ENCODE measurements at regions of chr20 and their contacts with region 1.

Region 1: DNA sequence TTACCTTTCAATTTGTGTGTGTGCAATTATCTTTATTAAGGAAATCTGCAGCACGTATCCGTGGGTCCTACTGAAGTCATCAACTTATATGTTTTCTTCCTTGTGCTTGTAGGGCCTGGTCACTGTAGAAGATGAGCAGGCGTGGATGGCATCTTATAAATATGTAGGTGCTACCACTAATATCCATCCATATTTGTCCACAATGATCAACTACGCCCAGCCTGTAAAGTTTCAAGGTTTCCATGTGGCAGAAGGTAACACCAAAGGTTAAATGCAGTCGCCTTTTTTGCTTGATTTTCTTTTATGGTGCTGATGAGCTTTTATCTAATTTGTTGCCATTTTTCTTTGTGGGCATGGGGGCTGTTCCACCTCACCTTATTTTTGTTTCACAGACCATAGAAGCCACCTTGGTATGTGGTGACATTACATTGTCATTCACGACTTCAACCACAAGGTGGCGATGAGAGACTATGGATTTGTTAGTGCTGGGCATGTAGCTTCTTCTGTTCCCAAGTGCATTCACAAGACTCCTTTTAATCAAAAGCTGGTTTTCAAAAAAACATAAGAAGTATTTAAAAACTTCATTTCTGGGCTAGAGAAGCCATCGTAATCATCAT is 106.5 kb upstream of the LAMP5 start:
- DNase-seq: peak; percentile 33
- H3K4me3 ChIP-seq: no peak overlapping the region
- CTCF ChIP-seq: peak; percentile 72

Region 2: GRCh38 chr20:8756410-8756809 is 651.5 kb before region 1 on chr20:
- CTCF ChIA-PET with region 1: interaction called, 11 read pairs
- POLR2A ChIA-PET with region 1: no interaction called
- DNase-seq: peak; percentile 52
- H3K4me3 ChIP-seq: no peak overlapping the region
- CTCF ChIP-seq: no peak

Region 3: DNA sequence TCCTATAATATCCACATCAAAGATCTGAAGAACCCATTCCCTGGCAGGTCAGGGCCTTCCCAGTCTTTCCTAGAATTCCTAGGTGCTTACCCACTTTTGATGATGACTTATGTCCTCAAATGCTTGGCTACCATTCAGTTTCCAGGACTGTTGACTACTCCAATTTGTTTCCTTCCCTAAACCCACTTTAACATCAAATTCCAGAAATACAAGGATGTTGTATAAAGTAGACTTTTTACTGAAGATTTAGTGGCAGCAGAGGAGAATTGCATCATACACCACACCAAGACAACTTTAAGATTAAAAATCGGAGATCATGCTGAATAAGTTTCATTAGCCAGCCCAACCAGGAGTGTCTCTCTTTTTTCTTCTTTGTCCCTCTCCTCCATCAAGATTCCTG is 96.8 kb before region 1 on chr20:
- CTCF ChIA-PET with region 1: no interaction called
- POLR2A ChIA-PET with region 1: no interaction called
- DNase-seq: no peak
- H3K4me3 ChIP-seq: no peak overlapping the region
- CTCF ChIP-seq: no peak

Region 4: DNA sequence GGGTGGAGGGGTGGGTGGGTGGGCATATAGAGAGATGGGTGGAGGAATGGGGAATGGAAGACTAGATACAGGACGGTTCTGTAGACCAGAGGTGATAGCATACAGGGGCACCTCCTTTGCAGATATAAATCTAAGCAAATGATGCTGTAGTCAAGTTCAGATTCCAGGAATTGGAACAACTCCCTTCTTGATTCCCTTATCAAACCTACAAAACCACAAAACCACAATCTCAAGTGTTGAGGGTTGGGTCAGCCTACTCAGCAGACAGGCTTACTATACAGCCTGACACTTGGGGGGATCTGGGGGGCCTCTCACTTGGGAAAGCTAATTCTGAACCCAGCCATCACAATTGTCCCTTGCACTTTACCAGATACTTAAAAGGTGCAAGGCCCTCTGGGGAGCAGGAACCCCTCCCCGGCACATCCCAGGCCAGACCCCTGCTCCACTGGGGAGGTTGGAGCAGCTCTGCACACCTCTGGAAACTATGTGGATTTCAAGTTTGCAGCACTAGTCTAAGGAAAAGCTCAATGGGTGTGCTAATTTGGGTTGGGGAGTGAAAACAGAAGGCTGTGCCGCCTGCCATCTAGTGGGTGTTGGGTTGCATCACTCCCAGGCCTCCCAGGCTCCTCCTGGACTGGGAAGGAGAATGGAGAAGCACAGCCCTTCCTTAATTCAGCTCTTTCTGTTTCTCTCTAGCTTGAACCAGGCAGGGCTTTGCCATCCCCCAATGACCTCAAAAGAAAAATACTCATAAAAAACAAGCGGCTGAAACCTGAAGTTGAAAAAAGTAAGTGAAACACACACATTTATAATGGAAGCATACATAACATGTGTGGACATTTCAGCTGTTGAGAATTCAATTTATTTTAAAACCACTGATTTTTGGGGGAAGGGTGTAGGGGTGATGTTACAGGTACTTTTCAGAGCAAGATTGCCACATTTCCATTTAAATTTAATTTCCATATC is 14.7 kb before region 1 on chr20:
- CTCF ChIA-PET with region 1: interaction called, 27 read pairs
- POLR2A ChIA-PET with region 1: no interaction called
- DNase-seq: no peak
- H3K4me3 ChIP-seq: no peak overlapping the region
- CTCF ChIP-seq: peak; percentile 91

Region 5: DNA sequence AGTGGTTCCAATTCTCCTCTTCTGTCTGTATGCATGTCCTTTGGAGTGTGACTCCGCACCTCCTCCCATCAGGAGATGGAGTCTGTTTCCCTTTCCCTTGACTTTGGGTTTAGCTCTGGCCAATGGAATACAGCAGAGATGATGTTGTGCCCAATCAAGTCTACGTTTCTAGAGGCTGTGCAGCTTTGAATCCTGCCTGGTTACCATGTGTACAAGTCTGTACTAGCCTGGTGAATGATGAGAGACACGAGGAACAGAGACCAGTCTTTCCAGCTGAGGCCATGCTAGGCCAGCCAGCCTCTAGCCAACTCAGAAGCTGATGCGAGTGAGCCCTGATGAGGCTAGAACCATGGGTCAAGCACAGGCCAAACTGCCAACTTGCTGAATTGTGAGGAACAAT is 189.6 kb after region 1 on chr20:
- CTCF ChIA-PET with region 1: interaction called, 42 read pairs
- POLR2A ChIA-PET with region 1: no interaction called
- DNase-seq: no peak
- H3K4me3 ChIP-seq: no peak overlapping the region
- CTCF ChIP-seq: no peak

Region 6: DNA sequence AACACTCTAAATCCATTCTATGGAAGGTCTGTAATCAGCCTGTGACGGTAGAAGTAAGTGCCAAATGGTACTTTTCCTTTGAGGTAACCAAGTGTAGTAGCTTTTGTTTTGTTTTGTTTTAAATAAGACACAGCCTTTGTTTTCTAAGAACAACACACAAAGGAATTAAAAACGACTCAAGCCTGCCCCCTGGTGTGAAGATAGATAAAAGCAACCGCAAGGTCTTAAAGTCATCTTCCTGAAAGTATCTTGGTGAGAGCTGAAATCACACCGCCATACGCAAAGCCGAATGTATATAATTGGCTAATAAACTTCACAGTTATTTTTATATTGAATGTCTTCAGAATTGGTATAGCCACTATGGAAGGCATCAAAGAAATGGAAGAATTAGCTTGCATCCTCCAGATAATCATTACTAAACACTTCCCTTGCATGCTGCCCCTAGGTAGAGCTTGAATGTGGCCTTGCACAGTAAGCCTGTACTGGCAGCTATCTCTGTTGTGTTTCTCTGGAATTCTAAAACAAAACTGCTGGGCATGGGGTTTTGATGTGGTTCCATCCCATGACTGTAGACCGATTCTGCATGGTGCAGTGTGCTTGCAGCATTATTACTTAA is 202.1 kb after region 1 on chr20:
- CTCF ChIA-PET with region 1: interaction called, 478 read pairs
- POLR2A ChIA-PET with region 1: interaction called, 3 read pairs
- DNase-seq: peak; percentile 29
- H3K4me3 ChIP-seq: no peak overlapping the region
- CTCF ChIP-seq: peak; percentile 42

Region 7: GRCh38 chr20:9912858-9913434 is 505.0 kb after region 1 on chr20:
- CTCF ChIA-PET with region 1: interaction called, 50 read pairs
- POLR2A ChIA-PET with region 1: interaction called, 3 read pairs
- DNase-seq: peak; percentile 3
- H3K4me3 ChIP-seq: no peak overlapping the region
- CTCF ChIP-seq: peak; percentile 71

Measured in AG04449 (cell line).